ENCODE measurements at regions of chr1 and their contacts with region 1.

Region 1: GRCh38 chr1:112619520-112620376 is at the start of gene CAPZA1:
- DNase-seq: peak; percentile 90
- ATAC-seq: peak; percentile 93
- H3K4me3 ChIP-seq: peak within 1 kb of the TSS; percentile 86
- H3K27ac ChIP-seq: peak within 1 kb of the TSS; percentile 99
- H3K4me1 ChIP-seq: no peaks in the 10 kb centered on the region
- H3K27me3 ChIP-seq: no peaks in the 10 kb centered on the region
- CTCF ChIP-seq: no peak
- POLR2A ChIP-seq: peak; percentile 93
- RAD21 ChIP-seq: no peak
- total RNA-seq, gene CAPZA1: 262 and 440 TPM in 2 replicates

Region 2: GRCh38 chr1:112431038-112431437 is 188.7 kb before region 1 on chr1:
- CTCF ChIA-PET with region 1: no interaction called
- POLR2A ChIA-PET with region 1: interaction called, 11 read pairs
- dilution Hi-C with region 1: no loop called
- in situ Hi-C with region 1: no loop called
- intact Hi-C with region 1: no loop called
- DNase-seq: no peak
- ATAC-seq: no peak
- H3K4me3 ChIP-seq: no peak overlapping the region
- H3K27ac ChIP-seq: no peak overlapping the region
- H3K4me1 ChIP-seq: no peaks in the 10 kb centered on the region
- H3K27me3 ChIP-seq: no peaks in the 10 kb centered on the region
- CTCF ChIP-seq: no peak
- POLR2A ChIP-seq: no peak
- RAD21 ChIP-seq: no peak

Measured in IMR-90 (cell line).